ENCODE measurements at regions of chr10 and their contacts with region 1.

Region 1: DNA sequence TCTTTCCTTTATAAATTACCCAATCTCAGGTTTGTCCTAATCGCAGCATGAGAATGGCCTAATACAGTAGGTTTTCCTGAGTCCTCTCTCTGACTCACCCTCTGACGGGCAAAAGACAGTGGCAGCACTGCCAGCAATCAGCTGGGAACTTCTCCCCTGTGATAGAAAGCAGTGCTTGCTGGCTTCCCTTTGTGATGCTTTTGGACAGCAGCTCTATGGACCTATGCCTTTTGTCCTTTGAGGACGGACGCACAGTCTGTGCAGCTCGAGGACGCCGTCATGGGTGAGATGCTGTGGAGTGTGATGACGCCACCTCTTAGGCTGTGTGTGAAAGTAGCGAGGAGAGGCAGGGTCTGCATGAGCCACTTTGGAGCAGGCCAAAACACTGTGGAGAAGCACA is 68.8 kb downstream of the KIAA1217 start:
- DNase-seq: no peak
- H3K4me3 ChIP-seq: no peak overlapping the region
- H3K4me3 Mint-ChIP-seq: peak overlapping the region; percentile 7
- H3K27ac Mint-ChIP-seq: peak overlapping the region; percentile 71
- H3K4me1 ChIP-seq: peaks cover 8% of the 10 kb centered on the region
- H3K4me1 Mint-ChIP-seq: peaks cover 32% of the 10 kb centered on the region
- H3K27me3 ChIP-seq: no peaks in the 10 kb centered on the region
- H3K27me3 Mint-ChIP-seq: no peaks in the 10 kb centered on the region
- CTCF ChIP-seq: no peak

Region 2: GRCh38 chr10:24299578-24300260 is 21.9 kb after region 1 on chr10:
- CTCF ChIA-PET with region 1: no interaction called
- POLR2A ChIA-PET with region 1: no interaction called
- intact Hi-C with region 1: loop called (anchors 2 kb)
- DNase-seq: no peak
- H3K4me3 ChIP-seq: no peak overlapping the region
- H3K4me3 Mint-ChIP-seq: no peak overlapping the region
- H3K27ac Mint-ChIP-seq: no peak overlapping the region
- H3K4me1 ChIP-seq: no peaks in the 10 kb centered on the region
- H3K4me1 Mint-ChIP-seq: no peaks in the 10 kb centered on the region
- H3K27me3 ChIP-seq: no peaks in the 10 kb centered on the region
- H3K27me3 Mint-ChIP-seq: no peaks in the 10 kb centered on the region
- CTCF ChIP-seq: no peak

Measured in Caco-2 (cell line).